Activated naive CD4-positive, alpha-beta T cell treated with anti-CD3 and anti-CD28 coated beads for 36 hours (primary cell): ENCODE measurements at regions of chr19 and their contacts with region 1.

Region 1: DNA sequence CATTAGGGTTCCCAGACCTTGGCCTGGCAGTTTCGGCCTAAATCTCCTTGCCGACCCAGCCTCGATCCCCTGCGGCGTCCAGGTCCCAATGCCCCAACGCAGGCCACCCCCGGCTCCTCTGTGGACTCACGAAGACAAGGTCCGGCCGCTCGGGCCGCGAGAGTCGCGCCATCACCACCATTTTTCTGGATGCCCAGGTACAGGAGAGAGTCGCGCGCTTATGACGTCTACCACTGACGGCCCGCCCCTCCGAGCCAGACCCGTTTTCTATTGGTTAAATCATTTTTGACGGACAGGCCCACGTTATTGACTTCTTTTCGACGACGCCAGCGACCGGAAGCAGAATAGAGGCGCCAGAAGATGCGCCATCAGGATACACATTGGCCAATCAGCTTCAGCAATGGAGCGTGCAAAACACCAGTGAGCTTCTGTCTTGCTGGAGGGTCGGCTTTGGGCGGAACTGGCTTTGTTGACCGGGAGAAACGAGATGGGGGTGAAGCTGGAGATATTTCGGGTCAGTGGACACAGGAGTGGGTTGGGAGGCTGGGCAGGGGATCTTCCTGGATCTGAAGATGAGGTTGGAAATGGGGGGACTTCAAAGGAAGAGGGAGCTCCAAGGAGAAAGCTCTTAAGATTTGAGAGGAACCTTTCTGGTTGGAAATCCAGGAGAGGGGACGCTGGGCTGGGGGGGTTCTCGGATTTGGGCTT is at the starts of genes PET100 and XAB2:
- DNase-seq: peak; percentile 97
- H3K4me3 Mint-ChIP-seq: peak within 1 kb of the TSS; percentile 98
- H3K27ac Mint-ChIP-seq: peak within 1 kb of the TSS; percentile 97
- H3K4me1 Mint-ChIP-seq: peaks cover 42% of the 10 kb centered on the region
- H3K27me3 Mint-ChIP-seq: no peaks in the 10 kb centered on the region
- total RNA-seq, gene PET100: 93.9 to 96.5 TPM
- total RNA-seq, gene XAB2: 60.0 to 60.4 TPM

Region 2: GRCh38 chr19:7458675-7459074 is 170.8 kb before region 1 on chr19:
- CTCF ChIA-PET with region 1: no interaction called
- intact Hi-C with region 1: no loop called
- DNase-seq: no peak
- H3K4me3 Mint-ChIP-seq: no peak overlapping the region
- H3K27ac Mint-ChIP-seq: no peak overlapping the region
- H3K4me1 Mint-ChIP-seq: no peaks in the 10 kb centered on the region
- H3K27me3 Mint-ChIP-seq: no peaks in the 10 kb centered on the region

Region 3: DNA sequence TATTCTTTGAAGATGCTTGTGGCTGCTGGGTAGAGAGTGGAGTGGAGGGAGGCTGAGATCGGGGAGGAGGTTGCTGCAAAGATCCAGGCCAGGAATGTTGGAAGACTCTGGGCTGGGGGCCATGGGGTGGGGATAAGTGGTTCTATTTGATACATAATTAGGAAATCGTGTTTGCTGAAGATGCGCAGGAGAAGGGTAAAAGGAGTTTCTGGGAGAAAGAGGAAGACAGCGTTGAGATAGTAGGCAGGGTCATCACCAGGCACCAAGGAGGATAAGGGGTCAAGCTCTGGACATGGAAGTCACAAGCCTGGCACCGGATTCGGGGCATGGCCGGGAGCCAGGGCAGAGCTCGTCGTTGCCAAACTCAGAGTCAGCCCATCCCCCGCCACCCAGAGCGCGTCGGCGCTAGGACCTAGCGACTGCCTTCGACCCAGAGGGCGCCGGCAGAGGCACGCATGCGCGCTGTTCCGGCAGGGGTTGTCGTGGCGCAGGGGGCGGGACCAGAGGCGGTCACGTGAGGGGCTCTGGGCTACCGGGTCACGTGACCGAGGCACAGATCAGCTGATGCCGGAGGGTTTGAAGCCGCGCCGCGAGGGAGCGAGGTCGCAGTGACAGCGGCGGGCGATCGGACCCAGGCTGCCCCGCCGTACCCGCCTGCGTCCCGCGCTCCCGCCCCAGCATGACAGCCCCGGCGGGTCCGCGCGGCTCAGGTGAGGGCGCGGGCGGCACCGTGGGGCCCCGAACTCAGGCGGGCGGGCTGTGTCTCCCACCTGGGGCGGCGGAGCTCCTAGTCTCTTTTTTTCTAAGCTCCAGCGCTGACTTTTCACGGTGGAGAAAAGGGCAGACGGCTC is 107.2 kb before region 1 on chr19 and contains the start of gene MCOLN1:
- CTCF ChIA-PET with region 1: no interaction called
- intact Hi-C with region 1: loop called (anchors 2 kb)
- DNase-seq: peak; percentile 99
- H3K4me3 Mint-ChIP-seq: peak within 1 kb of the TSS; percentile 72
- H3K27ac Mint-ChIP-seq: peak within 1 kb of the TSS; percentile 63
- H3K4me1 Mint-ChIP-seq: peaks cover 11% of the 10 kb centered on the region
- H3K27me3 Mint-ChIP-seq: no peaks in the 10 kb centered on the region
- total RNA-seq, gene MCOLN1: 4.2 to 5.2 TPM

Region 4: DNA sequence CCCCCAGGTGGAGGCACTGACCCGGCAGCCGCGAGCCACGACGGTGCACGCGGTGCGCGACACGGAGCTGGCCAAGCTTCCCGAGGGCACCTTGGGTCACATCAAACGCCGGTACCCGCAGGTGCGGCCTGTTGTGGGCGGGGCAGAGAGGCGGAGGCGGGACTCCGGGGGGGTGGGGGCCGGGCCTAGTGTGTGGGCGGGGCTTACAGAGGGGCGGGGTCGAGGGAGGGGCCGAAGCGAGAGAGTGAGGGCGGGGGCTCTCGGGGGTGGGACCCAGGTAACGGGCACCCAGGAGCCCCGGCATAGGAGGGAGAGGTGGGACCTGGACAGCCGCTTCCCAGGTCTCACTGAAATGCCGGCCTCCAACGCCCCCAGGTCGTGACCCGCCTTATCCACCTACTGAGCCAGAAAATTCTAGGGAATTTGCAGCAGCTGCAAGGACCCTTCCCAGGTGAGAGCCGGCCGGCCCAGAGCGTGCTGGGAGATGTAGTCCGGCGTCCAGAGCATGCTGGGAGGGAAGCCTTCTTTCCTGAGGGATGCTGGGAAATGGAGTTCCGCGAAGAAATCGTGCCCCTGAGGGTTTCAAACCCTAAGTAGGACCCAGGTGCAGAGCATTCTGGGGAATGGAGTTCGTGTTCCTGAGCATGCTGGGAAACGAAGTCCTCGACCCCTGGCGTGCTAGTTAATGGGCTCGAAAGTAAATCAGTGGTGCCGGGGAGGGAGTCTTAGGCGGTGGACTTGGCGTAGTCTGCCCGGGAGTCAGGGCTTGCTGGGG is 78.3 kb before region 1 on chr19:
- CTCF ChIA-PET with region 1: no interaction called
- intact Hi-C with region 1: no loop called
- DNase-seq: peak; percentile 46
- H3K4me3 Mint-ChIP-seq: no peak overlapping the region
- H3K27ac Mint-ChIP-seq: no peak overlapping the region
- H3K4me1 Mint-ChIP-seq: peaks cover 6% of the 10 kb centered on the region
- H3K27me3 Mint-ChIP-seq: no peaks in the 10 kb centered on the region

Region 5: DNA sequence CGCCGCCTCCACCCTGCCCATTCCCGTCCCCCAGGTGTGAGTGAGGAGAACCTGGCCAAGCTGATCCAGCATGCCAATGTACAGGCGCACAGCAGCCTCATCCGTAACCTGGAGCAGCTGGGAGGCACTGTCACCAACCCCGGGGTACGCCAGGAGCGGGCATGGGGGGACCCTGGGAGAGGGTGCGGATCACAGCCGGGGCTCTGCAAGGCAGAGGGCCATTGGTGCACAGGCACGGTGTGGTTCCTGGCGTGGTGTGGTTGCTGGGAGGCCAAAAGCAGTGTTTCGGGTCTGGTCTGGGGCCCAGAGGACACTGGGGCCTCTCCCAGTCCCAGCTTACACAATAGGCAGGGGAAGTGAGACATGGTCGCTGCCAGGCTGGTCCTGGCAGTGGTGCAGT is 15.7 kb after region 1 on chr19:
- CTCF ChIA-PET with region 1: no interaction called
- intact Hi-C with region 1: no loop called
- DNase-seq: no peak
- H3K4me3 Mint-ChIP-seq: no peak overlapping the region
- H3K27ac Mint-ChIP-seq: no peak overlapping the region
- H3K4me1 Mint-ChIP-seq: peaks cover 1% of the 10 kb centered on the region
- H3K27me3 Mint-ChIP-seq: no peaks in the 10 kb centered on the region

Region 6: GRCh38 chr19:7829561-7830271 is 200.2 kb after region 1 on chr19 and contains the start of gene EVI5L:
- CTCF ChIA-PET with region 1: no interaction called
- intact Hi-C with region 1: no loop called
- DNase-seq: peak; percentile 99
- H3K4me3 Mint-ChIP-seq: peak within 1 kb of the TSS; percentile 84
- H3K27ac Mint-ChIP-seq: peak within 1 kb of the TSS; percentile 68
- H3K4me1 Mint-ChIP-seq: peaks cover 18% of the 10 kb centered on the region
- H3K27me3 Mint-ChIP-seq: peaks cover 6% of the 10 kb centered on the region
- total RNA-seq, gene EVI5L: 5.2 TPM